ENCODE measurements at regions of chr5 and their contacts with region 1.

Region 1: DNA sequence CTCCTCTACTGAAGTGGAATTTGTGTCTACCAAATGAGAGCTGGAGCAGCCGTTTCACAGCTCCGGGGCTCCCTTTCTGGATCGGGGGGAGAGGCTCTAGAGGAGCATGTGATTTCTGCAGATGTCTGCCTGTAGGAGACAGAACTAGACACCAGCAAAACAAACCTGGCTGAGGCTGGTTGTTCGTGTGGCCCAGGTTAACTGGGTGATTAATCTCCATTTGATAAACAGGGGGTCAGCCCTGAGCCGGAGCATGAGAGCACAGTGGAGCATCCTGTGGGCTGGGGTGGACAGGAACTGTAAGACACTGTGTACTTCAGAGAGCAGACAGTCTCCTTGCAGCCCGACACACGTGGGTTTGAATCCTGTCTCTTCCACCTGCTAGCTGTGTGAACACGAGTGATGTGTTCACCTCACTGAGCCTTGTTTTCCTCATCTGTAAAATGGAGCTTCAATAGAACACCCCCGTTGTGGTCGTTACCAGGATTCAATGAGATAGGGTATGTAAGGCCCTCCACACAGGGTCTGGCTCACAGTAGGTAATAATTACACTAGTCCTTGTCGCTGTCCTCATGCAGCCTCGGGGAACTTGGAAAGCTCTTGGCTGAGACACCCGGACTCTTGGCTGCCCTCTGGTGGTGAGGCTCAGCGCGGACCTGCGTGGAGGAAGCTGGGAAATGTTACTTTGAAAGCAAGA is 12.9 kb downstream of the CXCL14 start:
- DNase-seq: peak in 1 of 2 experiments; percentile 95
- H3K4me3 ChIP-seq: peak overlapping the region in 1 of 4 experiments; percentile 12; a peak in 1 of 8 replicates
- H3K27ac ChIP-seq: no peak overlapping the region
- H3K4me1 ChIP-seq: peaks cover 0 to 23% (median 9%) of the 10 kb centered on the region in 4 experiments; a peak in 6 of 7 replicates
- H3K27me3 ChIP-seq: no peaks in the 10 kb centered on the region
- CTCF ChIP-seq: peak; percentile 85 to 92 (median 88)
- EP300 ChIP-seq: no peak
- POLR2A ChIP-seq: no peak
- RAD21 ChIP-seq: peak; percentile 49 to 66

Region 2: DNA sequence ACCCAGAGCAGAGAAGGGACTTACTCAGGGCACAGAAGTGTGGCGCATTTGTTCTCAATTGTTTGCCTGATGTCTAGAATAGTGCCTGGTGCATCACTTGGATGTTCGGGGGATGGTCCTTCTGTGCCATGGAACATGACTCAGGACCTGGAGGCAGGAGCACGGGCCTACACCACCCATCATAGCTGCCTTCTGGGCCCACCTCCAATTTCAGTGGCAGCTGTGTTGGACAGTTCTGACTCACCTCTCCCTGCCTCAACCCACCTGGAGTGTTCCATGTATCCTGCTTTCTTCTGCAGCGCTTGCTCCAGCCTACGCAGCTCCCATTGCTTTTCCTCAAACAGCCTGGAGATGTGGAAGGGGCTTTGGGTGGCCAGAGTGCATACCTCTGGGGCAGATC is 25.4 kb after region 1 on chr5:
- CTCF ChIA-PET with region 1: interaction called, 248 read pairs
- POLR2A ChIA-PET with region 1: no interaction called
- DNase-seq: no peak
- H3K4me3 ChIP-seq: no peak overlapping the region
- H3K27ac ChIP-seq: no peak overlapping the region
- H3K4me1 ChIP-seq: no peaks in the 10 kb centered on the region; a peak in 1 of 7 replicates
- H3K27me3 ChIP-seq: peaks cover 0 to 6% (median under 1%) of the 10 kb centered on the region in 4 experiments; a peak in 1 of 7 replicates
- CTCF ChIP-seq: no peak
- EP300 ChIP-seq: no peak
- POLR2A ChIP-seq: no peak
- RAD21 ChIP-seq: no peak

Region 3: DNA sequence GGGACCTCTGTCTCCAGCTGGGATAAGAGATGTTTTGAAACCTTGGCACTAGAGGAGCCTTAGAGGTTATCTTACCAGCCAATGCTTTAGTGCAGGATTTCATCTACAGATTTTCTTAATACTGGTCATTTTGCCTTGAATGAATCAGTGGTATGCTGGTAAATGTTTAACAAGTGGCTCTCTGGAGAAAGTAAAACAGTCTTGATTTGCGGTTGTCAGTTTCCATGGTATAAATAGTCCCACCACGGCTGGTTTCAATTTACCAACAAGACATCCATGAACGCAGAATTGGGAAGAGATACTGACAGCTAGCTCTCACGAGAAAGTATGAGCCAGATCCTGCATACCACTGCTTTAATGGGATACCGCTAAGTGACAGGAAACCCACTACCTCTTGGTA is 69.6 kb after region 1 on chr5:
- CTCF ChIA-PET with region 1: interaction called, 14 read pairs
- POLR2A ChIA-PET with region 1: no interaction called
- DNase-seq: no peak
- H3K4me3 ChIP-seq: no peak overlapping the region
- H3K27ac ChIP-seq: no peak overlapping the region
- H3K4me1 ChIP-seq: no peaks in the 10 kb centered on the region
- H3K27me3 ChIP-seq: no peaks in the 10 kb centered on the region
- CTCF ChIP-seq: no peak
- EP300 ChIP-seq: no peak
- POLR2A ChIP-seq: no peak
- RAD21 ChIP-seq: no peak

Region 4: GRCh38 chr5:135871268-135871915 is 305.5 kb after region 1 on chr5:
- CTCF ChIA-PET with region 1: interaction called, 18 read pairs
- POLR2A ChIA-PET with region 1: no interaction called
- DNase-seq: no peak
- H3K4me3 ChIP-seq: no peak overlapping the region
- H3K27ac ChIP-seq: no peak overlapping the region
- H3K4me1 ChIP-seq: no peaks in the 10 kb centered on the region
- H3K27me3 ChIP-seq: no peaks in the 10 kb centered on the region; a peak in 1 of 7 replicates
- CTCF ChIP-seq: no peak
- EP300 ChIP-seq: no peak
- POLR2A ChIP-seq: no peak
- RAD21 ChIP-seq: no peak

Region 5: DNA sequence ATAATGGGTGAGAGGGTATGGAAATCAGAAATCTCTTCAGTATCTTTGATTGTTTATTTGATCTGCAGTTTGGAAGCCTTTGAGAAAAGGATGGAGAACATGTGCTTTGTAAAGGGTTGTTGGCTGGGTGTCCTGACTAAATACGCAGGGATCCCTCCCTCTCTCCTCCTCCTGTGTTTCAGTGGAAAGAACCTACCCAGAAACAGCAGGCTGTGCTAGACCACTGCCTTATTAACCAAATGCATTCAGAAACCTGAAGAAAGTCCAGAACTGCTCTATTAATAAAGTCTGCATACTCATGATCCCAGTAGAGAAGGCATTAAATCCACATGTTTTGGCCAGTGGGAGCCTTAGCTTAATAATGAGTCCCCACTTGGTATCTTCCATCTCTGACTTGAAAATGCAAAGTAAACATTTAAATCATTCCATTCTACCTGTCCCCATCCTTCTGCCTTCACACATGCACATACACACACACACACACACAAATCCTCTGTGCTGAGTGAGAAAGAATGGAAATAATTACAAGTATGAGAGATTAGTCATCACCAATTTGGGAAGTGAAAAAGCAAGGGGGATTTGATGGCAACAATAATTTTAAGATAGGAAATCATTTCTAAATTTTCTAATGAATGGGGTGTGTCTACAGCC is 398.9 kb after region 1 on chr5:
- CTCF ChIA-PET with region 1: no interaction called
- POLR2A ChIA-PET with region 1: no interaction called
- DNase-seq: no peak
- H3K4me3 ChIP-seq: no peak overlapping the region
- H3K27ac ChIP-seq: no peak overlapping the region
- H3K4me1 ChIP-seq: no peaks in the 10 kb centered on the region
- H3K27me3 ChIP-seq: no peaks in the 10 kb centered on the region
- CTCF ChIP-seq: no peak
- EP300 ChIP-seq: no peak
- POLR2A ChIP-seq: no peak
- RAD21 ChIP-seq: no peak